ENCODE measurements at regions of chr10 and their contacts with region 1.

Region 1: GRCh38 chr10:102399217-102400089 is 3.9 kb downstream of the NFKB2 start:
- DNase-seq: peak; percentile 59
- H3K4me3 ChIP-seq: peak overlapping the region; percentile 50
- H3K27ac ChIP-seq: peak overlapping the region; percentile 47
- H3K27me3 ChIP-seq: no peaks in the 10 kb centered on the region
- CTCF ChIP-seq: peak; percentile 78

Region 2: DNA sequence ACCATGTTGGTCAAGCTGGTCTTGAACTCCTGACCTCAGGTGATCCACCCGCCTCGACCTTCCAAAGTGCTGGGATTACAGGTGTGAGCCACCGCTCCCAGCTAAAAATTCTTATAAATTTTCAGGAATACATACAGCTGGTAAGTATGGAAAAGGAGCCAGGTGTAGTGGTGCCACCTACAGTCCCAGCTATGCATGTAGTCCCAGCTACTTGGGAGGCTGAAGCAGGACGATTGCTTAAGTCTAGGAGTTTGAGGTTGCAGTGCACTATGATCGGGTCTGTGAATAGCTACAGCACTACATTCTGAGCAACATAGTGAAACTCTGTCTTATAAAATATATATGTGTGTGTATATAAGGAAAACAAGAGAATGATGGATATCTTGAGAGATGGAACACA is 298.3 kb before region 1 on chr10:
- CTCF ChIA-PET with region 1: no interaction called
- POLR2A ChIA-PET with region 1: no interaction called
- DNase-seq: no peak
- H3K4me3 ChIP-seq: no peak overlapping the region
- H3K27ac ChIP-seq: no peak overlapping the region
- H3K27me3 ChIP-seq: no peaks in the 10 kb centered on the region
- CTCF ChIP-seq: no peak

Region 3: GRCh38 chr10:102151774-102152544 is 247.5 kb before region 1 on chr10 and contains the start of gene NOLC1:
- CTCF ChIA-PET with region 1: interaction called, 13 read pairs
- POLR2A ChIA-PET with region 1: no interaction called
- DNase-seq: peak; percentile 99
- H3K4me3 ChIP-seq: peak within 1 kb of the TSS; percentile 98
- H3K27ac ChIP-seq: peak within 1 kb of the TSS; percentile 99
- H3K27me3 ChIP-seq: no peaks in the 10 kb centered on the region
- CTCF ChIP-seq: no peak
- polyA plus RNA-seq, gene NOLC1: 60.9 and 80.8 TPM in 2 replicates

Region 4: GRCh38 chr10:102540023-102540422 is 140.6 kb after region 1 on chr10:
- CTCF ChIA-PET with region 1: no interaction called
- POLR2A ChIA-PET with region 1: interaction called, 15 read pairs
- DNase-seq: no peak
- H3K4me3 ChIP-seq: no peak overlapping the region
- H3K27ac ChIP-seq: no peak overlapping the region
- H3K27me3 ChIP-seq: no peaks in the 10 kb centered on the region
- CTCF ChIP-seq: peak; percentile 47

Region 5: DNA sequence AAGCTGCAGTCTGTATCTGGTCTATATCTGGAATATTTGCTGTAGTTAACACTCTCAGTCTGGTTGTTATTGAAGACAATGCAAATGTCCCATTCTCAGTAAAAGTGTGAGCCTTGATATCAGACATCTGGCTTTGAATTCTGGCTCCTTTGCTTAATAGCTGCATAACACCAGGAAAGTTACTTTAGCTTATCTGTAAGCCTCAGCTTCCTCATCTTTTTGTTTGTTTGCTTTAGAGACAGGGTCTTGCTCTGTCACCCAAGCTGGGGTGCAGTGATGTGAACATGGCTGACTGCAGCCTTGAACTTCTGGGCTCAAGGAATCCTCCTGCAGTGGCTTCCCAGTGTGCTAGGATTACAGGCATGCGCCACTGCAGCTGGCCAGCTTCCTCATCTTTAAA is 559.9 kb after region 1 on chr10:
- CTCF ChIA-PET with region 1: no interaction called
- POLR2A ChIA-PET with region 1: no interaction called
- DNase-seq: no peak
- H3K4me3 ChIP-seq: no peak overlapping the region
- H3K27ac ChIP-seq: no peak overlapping the region
- H3K27me3 ChIP-seq: no peaks in the 10 kb centered on the region
- CTCF ChIP-seq: no peak

Region 6: GRCh38 chr10:103373544-103373943 is 974.1 kb after region 1 on chr10:
- CTCF ChIA-PET with region 1: no interaction called
- POLR2A ChIA-PET with region 1: no interaction called
- DNase-seq: no peak
- H3K4me3 ChIP-seq: no peak overlapping the region
- H3K27ac ChIP-seq: no peak overlapping the region
- H3K27me3 ChIP-seq: no peaks in the 10 kb centered on the region
- CTCF ChIP-seq: no peak